ENCODE measurements at regions of chr16 and their contacts with region 1.

Region 1: GRCh38 chr16:87499189-87499486 is 6.3 kb upstream of the ZCCHC14 start:
- DNase-seq: peak; percentile 56
- H3K4me3 ChIP-seq: no peak overlapping the region
- H3K27ac ChIP-seq: peak overlapping the region; percentile 31
- H3K27me3 ChIP-seq: peaks cover 3% of the 10 kb centered on the region
- CTCF ChIP-seq: no peak

Region 2: DNA sequence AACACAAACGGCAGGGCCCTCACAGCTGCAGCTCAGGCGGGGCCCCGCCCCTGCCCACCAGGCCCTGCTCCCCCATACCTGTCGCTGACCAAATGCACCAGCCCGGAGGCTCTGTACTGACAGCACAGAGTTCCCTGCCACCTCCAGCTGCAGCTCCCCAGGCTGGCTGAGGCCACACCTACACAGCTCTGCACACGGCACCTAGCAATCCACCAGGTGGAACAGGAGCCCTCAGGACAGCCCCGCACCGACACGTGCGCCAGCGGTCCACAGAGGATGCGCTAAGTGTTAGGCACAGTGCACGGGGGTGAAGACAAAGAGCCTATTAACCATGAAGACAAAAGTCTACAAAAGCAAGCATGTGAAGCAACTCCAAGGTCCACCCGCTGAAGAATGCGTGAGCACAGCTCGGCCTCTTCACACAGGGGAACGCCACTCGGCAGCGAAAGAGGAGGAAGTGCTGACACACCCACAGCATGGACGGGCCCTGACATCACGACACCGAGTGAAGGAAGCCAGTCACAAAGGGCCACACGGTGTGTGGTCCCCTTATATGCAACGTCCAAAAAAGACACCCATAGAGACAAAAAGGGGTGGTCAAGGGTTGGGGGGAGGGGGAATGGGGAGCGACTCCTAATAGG is 11.7 kb before region 1 on chr16:
- CTCF ChIA-PET with region 1: no interaction called
- POLR2A ChIA-PET with region 1: no interaction called
- DNase-seq: no peak
- H3K4me3 ChIP-seq: no peak overlapping the region
- H3K27ac ChIP-seq: no peak overlapping the region
- H3K27me3 ChIP-seq: no peaks in the 10 kb centered on the region
- CTCF ChIP-seq: no peak

Region 3: GRCh38 chr16:89446136-89446974 is 1947.2 kb after region 1 on chr16:
- CTCF ChIA-PET with region 1: no interaction called
- POLR2A ChIA-PET with region 1: interaction called, 11 read pairs
- DNase-seq: no peak
- H3K4me3 ChIP-seq: no peak overlapping the region
- H3K27ac ChIP-seq: no peak overlapping the region
- H3K27me3 ChIP-seq: no peaks in the 10 kb centered on the region
- CTCF ChIP-seq: no peak

Measured in AG04450 (cell line).